Esophagus squamous epithelium (tissue), 5 donors: ENCODE measurements at regions of chr3 and their contacts with region 1.

Region 1: GRCh38 chr3:197501879-197502620 is 53.7 kb downstream of the BDH1 start:
- DNase-seq: no peak
- H3K4me3 ChIP-seq: peak overlapping the region in 1 of 4 donors; percentile 2
- H3K27ac ChIP-seq: peak overlapping the region; percentile 43 to 76 (median 59)
- H3K4me1 ChIP-seq: peaks cover 11 to 66% (median 17%) of the 10 kb centered on the region in 3 donors
- H3K27me3 ChIP-seq: no peaks in the 10 kb centered on the region
- CTCF ChIP-seq: peak; percentile 35 to 93 (median 78)
- POLR2A ChIP-seq: no peak

Region 2: GRCh38 chr3:197186887-197187588 is 315.0 kb before region 1 on chr3:
- intact Hi-C with region 1: no loop called
- DNase-seq: no peak
- H3K4me3 ChIP-seq: no peak overlapping the region
- H3K27ac ChIP-seq: no peak overlapping the region
- H3K4me1 ChIP-seq: no peaks in the 10 kb centered on the region
- H3K27me3 ChIP-seq: no peaks in the 10 kb centered on the region
- CTCF ChIP-seq: peak; percentile 24 to 78 (median 67)
- POLR2A ChIP-seq: no peak

Region 3: DNA sequence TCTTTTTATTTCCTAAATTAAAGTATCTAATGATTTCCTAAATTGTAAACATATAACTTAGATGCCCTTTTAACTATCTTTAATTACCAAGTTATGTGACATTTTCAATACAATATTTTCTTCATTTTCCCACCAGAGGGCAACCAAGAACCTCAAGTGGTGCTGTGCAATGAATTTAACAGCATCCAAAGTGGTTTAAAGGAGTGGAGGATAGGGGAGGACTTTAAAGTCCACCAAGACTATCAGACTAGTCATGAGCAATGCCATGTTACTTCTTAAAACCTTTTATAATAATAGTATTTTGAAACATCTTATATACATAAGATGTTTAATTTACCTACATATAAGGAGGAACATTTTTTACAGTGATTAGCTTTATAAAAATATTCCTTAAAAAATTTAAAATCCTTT is 278.0 kb before region 1 on chr3:
- intact Hi-C with region 1: loop called (anchors 10 kb)
- DNase-seq: no peak
- H3K4me3 ChIP-seq: no peak overlapping the region
- H3K27ac ChIP-seq: no peak overlapping the region
- H3K4me1 ChIP-seq: peaks cover 0 to 57% (median 18%) of the 10 kb centered on the region in 3 donors
- H3K27me3 ChIP-seq: no peaks in the 10 kb centered on the region
- CTCF ChIP-seq: peak in 5 of 6 experiments; percentile 37 to 66 (median 45)
- POLR2A ChIP-seq: no peak

Region 4: DNA sequence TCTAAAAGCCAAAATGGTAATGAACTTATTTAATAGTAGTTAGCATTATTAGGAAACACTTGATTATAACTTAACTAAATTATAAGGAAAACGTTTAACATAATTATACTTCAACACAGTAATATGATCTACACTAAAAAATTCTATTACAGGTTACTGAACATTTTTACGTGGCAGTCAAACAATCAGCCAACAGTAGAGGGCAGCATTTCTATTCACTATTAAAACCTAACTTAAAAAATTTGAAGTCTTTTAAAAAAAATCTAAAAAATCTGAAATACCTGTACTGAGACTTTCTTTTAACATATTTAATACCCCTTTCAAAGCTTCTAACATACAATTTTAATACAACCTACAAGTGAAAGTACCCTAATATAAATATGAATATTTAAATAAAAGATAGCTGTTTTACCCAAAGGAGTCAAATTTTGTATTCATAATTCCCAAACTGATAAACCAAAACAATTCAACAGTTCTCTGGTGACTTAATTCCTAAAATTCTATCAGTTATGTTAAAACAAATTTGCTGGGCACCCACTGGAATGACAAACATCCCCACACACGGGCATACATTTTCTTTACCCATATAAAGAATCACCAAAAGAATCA is 245.1 kb before region 1 on chr3:
- intact Hi-C with region 1: loop called (anchors 10 kb)
- DNase-seq: no peak
- H3K4me3 ChIP-seq: no peak overlapping the region
- H3K27ac ChIP-seq: no peak overlapping the region
- H3K4me1 ChIP-seq: peaks cover 0 to 48% (median 0%) of the 10 kb centered on the region in 3 donors
- H3K27me3 ChIP-seq: no peaks in the 10 kb centered on the region
- CTCF ChIP-seq: peak; percentile 32 to 79 (median 69)
- POLR2A ChIP-seq: no peak

Region 5: DNA sequence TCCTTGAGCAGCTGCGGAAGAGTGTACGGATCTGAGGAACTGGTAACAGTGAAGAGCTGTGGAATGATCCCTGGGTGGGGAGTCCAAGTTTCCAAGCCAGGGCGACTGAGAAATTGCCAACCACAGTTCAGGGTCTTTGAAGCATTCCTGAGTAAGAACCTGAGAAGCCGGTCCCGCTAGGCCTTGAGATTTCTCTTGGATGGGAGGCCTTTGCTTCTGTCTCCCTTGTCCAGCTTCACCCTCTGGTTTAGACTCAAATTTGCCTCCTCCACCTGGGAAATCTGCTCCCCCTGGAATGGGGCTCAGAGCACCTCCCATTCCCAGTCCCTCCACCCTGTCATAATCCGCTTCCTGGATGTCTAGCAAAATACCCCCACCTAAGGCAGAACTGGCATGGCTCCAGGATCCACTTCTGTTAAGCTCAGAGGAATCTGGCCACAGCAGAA is 75.9 kb before region 1 on chr3:
- intact Hi-C with region 1: no loop called
- DNase-seq: no peak
- H3K4me3 ChIP-seq: no peak overlapping the region
- H3K27ac ChIP-seq: peak overlapping the region in 1 of 4 donors; percentile 17
- H3K4me1 ChIP-seq: peaks cover 0 to 59% (median 16%) of the 10 kb centered on the region in 3 donors
- H3K27me3 ChIP-seq: no peaks in the 10 kb centered on the region
- CTCF ChIP-seq: no peak
- POLR2A ChIP-seq: no peak

Region 6: GRCh38 chr3:198028718-198029117 is 526.7 kb after region 1 on chr3:
- intact Hi-C with region 1: no loop called
- DNase-seq: no peak
- H3K4me3 ChIP-seq: no peak overlapping the region
- H3K27ac ChIP-seq: no peak overlapping the region
- H3K4me1 ChIP-seq: no peaks in the 10 kb centered on the region
- H3K27me3 ChIP-seq: no peaks in the 10 kb centered on the region
- CTCF ChIP-seq: no peak
- POLR2A ChIP-seq: no peak